Panc1 (cell line): ENCODE measurements at regions of chr1 and their contacts with region 1.

Region 1: DNA sequence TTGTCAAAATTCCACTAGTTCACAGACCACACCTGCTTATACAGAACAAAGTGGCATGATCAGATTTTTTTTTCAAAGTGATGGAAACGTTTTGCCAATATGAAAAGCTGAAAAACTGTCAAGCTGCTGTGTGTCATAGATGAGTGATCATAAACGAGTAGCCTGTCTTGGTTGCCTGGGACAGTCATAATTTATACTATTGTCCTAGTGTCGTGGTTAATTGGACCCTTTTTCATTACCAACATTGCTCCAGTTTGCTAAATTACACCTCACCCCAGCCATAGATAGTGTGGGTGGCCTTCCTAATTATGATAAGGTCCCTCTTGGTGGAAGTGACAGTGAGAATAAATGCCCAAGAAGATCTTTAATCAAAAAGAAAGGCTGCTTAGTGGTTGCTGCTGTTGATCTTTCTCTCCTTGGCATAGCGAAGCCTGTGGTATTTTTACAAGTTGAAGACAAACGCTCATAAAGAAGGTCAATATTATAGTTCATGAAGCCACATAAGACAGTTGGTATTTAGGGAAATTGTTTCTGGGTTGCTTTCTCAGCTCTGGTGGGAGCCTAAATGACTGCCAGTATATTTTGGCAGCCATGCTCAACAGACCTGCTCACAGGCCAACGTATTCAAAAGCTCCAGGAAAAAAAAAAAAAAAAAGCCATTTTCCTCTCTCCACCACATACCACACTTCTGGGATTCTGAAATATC is 478.1 kb downstream of the PLA2G4A start:
- DNase-seq: no peak
- ATAC-seq: peak; percentile 80
- H3K4me3 ChIP-seq: no peak overlapping the region
- H3K27ac ChIP-seq: peak overlapping the region; percentile 49; the same call in 1 of the 2 replicates
- H3K4me1 ChIP-seq: peaks cover 3% of the 10 kb centered on the region; the same call in 1 of the 2 replicates
- H3K27me3 ChIP-seq: no peaks in the 10 kb centered on the region
- CTCF ChIP-seq: no peak

Region 2: DNA sequence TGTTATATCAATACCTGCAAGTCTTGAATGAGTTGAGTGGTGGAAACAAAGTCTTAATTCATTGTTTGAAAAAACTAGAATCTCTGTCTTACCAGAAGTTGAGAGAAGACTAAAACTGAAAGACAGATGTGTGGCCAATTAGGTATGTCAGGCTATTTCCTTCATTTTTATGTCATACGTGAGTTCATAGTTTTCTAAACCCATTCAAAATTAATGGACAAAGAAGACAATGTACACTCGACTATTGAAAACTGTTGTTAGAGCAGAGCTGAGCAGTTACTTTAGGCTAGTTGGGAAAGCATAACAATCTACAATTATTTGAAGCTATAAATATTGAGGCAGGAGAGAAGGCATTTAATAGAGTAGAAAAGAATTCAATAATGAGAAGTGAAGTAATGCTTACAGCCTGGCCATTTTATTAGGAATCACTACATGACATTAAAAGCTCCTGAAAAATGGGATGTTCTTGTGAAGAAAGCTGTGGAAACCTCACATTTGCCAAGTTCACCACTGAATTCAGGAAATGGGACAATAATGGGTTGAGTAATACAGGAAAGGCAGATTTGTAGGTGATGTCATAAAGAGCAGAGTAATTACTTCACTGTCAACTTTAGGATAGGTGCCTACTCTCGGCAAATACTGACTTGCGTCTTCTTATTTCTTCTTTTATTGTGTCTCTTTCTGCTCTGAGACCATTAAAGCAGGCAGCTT is 273.7 kb before region 1 on chr1:
- CTCF ChIA-PET with region 1: no interaction called
- POLR2A ChIA-PET with region 1: no interaction called
- in situ Hi-C with region 1: no loop called
- intact Hi-C with region 1: no loop called
- DNase-seq: no peak
- ATAC-seq: no peak
- H3K4me3 ChIP-seq: no peak overlapping the region
- H3K27ac ChIP-seq: no peak overlapping the region
- H3K4me1 ChIP-seq: no peaks in the 10 kb centered on the region
- H3K27me3 ChIP-seq: no peaks in the 10 kb centered on the region
- CTCF ChIP-seq: no peak

Region 3: DNA sequence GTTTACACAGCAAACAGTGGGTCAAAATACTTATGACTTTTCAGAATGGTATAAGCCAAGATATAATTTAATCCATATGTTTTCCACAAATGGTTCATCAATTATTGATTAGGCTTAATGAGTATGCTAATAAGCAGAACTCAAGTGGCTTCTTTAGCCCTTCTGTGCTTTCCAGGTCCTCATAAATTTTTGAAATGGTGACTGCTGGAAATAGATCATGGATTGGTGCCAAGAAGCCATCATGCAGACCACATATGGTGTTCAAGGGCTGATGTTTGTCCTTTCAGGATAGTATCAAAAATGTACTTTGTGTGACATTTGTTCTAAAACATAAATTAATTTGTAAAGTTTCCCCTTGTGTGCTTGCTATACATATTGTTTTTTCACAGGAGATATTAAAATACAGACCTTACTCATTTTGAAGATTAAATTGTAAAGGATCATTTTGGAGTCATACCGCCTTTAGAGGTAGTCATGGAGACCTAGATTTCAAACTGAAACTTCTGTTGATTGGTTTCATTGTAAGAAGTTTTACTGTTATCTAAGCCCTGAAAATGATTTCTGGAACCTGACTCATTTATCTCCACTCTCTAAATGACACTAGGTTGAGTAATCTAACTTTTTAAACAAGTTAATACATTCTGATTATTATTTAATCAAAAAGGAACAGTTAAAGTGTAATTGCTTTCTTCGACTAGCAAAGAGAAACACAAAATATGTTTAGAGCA is 29.7 kb after region 1 on chr1:
- CTCF ChIA-PET with region 1: no interaction called
- POLR2A ChIA-PET with region 1: interaction called, 10 read pairs
- in situ Hi-C with region 1: no loop called
- intact Hi-C with region 1: no loop called
- DNase-seq: no peak
- ATAC-seq: no peak
- H3K4me3 ChIP-seq: no peak overlapping the region
- H3K27ac ChIP-seq: no peak overlapping the region
- H3K4me1 ChIP-seq: no peaks in the 10 kb centered on the region
- H3K27me3 ChIP-seq: no peaks in the 10 kb centered on the region
- CTCF ChIP-seq: no peak

Region 4: DNA sequence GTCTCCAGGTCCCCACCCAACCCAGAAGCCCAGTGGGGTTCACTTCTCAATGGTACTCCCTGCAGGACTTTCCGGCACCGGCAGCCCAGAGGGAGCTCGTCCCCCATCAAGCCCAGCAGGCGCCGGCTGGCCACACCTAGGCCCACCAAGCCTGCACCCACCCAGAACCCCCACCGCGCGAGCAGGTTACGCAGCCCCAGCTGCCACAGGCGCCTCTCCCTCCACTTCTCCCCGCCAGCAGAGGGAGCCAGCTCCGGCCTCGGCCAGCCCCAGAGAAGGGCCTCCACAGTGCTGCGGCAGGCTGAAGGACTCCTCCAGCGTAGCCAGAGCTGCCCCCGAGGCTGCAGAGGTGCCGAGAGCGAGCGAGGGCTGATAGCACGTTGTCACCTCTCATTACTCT is 244.2 kb after region 1 on chr1:
- CTCF ChIA-PET with region 1: no interaction called
- POLR2A ChIA-PET with region 1: interaction called, 10 read pairs
- in situ Hi-C with region 1: no loop called
- intact Hi-C with region 1: no loop called
- DNase-seq: no peak
- ATAC-seq: no peak
- H3K4me3 ChIP-seq: no peak overlapping the region
- H3K27ac ChIP-seq: no peak overlapping the region
- H3K4me1 ChIP-seq: no peaks in the 10 kb centered on the region
- H3K27me3 ChIP-seq: no peaks in the 10 kb centered on the region
- CTCF ChIP-seq: no peak